Right ventricle myocardium superior (tissue), 1 donor: ENCODE measurements at regions of chr10 and their contacts with region 1.

Region 1: DNA sequence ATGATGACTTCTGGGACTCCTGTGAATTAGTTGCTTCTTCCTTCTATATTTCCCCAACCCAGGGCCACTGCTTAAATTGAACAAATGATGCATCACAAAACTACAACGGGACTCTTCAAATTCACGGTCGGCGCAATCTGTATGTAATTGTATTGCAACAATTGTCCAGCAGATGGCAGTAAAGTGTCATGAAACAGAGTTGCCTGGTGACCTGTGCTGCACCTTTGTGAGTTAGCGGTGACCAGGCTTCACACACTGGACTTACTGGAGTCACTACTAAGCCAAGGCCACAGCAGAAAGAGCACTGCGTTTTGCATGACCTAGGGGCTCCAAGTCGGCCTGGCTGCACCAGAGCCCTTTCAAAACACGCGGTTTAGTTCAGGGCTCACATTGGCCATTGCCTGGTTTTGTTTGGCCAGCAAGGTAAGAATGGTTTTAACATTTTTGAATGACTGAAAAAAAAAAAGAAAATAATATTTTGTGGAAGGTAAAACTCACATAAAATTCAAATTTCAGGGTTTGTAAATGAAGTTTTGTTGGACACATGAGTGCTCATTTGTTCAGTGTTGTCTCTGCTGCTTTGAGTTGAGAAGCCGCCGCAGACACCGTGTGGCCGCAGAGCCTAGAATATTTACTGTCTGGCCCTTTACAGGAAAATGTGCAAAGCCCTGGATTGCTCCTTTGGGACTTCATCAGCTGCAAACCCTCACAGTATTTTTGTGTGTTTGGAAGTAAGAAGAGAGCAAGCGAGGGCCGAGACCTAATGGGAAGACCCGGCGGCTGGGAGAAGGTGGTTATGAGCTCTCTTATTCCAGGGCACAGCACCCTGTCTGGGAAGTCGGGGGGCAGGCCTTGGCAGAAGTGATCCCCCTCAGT is 23.2 kb upstream of the ZNF32 start:
- DNase-seq: no peak
- ATAC-seq: peak; percentile 71

Region 2: DNA sequence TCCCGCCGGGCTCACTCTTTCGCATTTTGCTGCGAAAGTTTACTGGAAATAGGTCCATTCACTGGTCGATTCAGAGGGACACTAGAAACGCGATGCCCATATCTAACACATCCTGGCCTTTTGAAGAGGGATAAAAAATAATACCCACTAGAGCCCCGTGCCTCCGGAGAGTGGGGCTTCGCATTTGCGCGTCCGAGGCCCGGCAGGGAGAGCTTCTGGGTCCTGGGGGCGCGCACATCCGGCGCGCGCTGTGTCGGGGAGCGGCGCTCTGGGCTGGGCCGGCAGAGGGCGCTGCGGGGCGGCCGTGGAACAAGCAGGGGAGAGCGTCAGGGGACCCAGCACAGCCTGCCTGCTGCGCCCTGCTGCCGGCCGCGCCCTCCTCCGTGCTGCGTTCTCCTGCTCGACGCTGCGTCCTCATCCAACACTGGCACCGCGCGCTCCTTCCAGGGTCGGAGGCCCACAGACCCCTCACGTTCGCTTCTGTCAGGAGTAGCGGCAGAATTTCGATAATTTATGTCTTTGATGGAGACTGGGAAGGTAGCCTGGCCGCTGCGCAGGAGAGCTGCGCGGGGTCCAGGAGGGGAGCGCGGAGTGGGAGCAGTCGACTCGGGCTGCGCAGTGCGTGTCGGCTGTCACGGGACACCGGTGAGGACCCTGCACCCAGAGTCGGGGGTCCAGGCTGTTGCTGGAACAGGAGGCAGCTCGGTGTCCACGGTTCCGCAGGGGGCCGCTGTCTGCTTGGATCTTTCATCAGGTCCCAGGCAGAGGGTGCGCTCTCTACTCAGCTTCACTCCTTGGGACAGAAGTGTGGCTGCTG is 18.3 kb after region 1 on chr10:
- intact Hi-C with region 1: no loop called
- DNase-seq: peak; percentile 93
- ATAC-seq: peak; percentile 98

Region 3: DNA sequence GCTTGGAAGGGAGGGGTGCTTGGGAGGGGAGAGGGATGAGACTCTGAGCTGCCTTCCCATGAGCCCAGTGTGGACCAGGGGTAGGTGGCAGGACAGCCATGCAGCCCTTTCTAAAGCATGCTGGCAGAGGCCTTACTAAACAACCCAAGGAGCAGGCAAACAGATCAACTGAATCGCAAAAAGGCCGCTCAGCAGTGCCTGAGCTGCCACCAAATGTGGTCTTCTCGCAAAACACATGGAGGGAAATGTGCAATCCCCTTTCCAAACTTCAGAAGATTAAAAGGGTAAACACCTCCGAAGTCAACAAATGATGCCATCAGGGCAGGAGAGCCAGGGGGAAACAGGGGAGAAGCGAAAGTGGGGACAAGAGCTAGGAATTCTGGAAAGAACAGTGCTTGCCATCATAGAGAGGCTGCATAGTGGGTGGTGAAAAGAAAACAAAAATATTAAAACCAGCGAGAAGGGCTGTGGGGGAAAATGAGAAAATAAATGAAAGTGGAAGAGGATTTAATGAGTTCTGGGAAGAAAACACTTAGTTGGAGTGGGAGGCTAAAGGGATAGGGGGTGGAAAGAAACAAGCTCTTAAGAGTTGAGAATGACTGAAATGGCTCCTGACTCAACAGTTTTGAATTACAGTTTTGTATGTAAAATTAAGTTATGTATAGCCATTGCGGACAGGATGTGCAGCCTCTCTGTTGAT is 39.0 kb after region 1 on chr10:
- intact Hi-C with region 1: no loop called
- DNase-seq: no peak
- ATAC-seq: no peak

Region 4: GRCh38 chr10:44310762-44311562 is 639.1 kb after region 1 on chr10:
- intact Hi-C with region 1: loop called (anchors 5 kb)
- DNase-seq: peak; percentile 93
- ATAC-seq: peak; percentile 99

Region 5: GRCh38 chr10:44864637-44865288 is 1192.9 kb after region 1 on chr10:
- intact Hi-C with region 1: loop called (anchors 2 kb)
- DNase-seq: peak; percentile 95
- ATAC-seq: peak; percentile 98